ENCODE measurements at regions of chr21 and their contacts with region 1.

Region 1: GRCh38 chr21:35528116-35529042 is 479.3 kb upstream of the RUNX1 start:
- DNase-seq: peak; percentile 79
- ATAC-seq: peak; percentile 88
- H3K4me3 Mint-ChIP-seq: peak overlapping the region; percentile 75
- H3K27ac Mint-ChIP-seq: peak overlapping the region; percentile 93
- H3K4me1 Mint-ChIP-seq: peaks cover 44% of the 10 kb centered on the region
- H3K27me3 Mint-ChIP-seq: no peaks in the 10 kb centered on the region

Region 2: GRCh38 chr21:34807146-34807880 is 721.1 kb before region 1 on chr21:
- CTCF ChIA-PET with region 1: no interaction called
- POLR2A ChIA-PET with region 1: no interaction called
- intact Hi-C with region 1: loop called in 1 of 2 experiments (anchors 1 kb)
- DNase-seq: peak; percentile 83
- ATAC-seq: peak; percentile 92
- H3K4me3 Mint-ChIP-seq: no peak overlapping the region
- H3K27ac Mint-ChIP-seq: peak overlapping the region; percentile 87
- H3K4me1 Mint-ChIP-seq: peaks cover 90% of the 10 kb centered on the region
- H3K27me3 Mint-ChIP-seq: no peaks in the 10 kb centered on the region

Region 3: GRCh38 chr21:35002879-35003722 is 525.3 kb before region 1 on chr21:
- CTCF ChIA-PET with region 1: no interaction called
- POLR2A ChIA-PET with region 1: interaction called, 21 read pairs
- intact Hi-C with region 1: no loop called
- DNase-seq: no peak
- ATAC-seq: peak; percentile 33
- H3K4me3 Mint-ChIP-seq: no peak overlapping the region
- H3K27ac Mint-ChIP-seq: peak overlapping the region; percentile 78
- H3K4me1 Mint-ChIP-seq: peaks cover 94% of the 10 kb centered on the region
- H3K27me3 Mint-ChIP-seq: no peaks in the 10 kb centered on the region

Region 4: DNA sequence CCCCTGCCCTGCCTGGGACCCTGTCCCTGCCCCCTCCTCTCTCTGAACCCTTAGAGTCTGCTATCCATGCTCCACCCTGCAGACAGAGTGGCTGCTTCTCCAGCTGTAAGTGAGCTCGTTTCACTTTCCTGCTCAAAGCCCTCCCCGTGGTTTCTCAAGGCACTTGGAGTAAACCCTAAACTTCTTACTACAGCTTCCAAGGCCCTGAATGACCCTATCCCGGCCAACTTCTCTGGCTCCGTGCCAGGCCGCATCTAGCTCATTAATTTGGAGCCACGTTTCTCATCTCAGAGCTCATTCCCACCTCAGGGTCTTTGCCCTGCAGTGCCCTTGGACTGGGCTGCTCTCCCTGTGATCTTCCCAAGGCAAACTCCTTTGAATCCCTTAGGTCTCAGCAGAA is 244.2 kb before region 1 on chr21:
- CTCF ChIA-PET with region 1: no interaction called
- POLR2A ChIA-PET with region 1: no interaction called
- intact Hi-C with region 1: no loop called
- DNase-seq: no peak
- ATAC-seq: no peak
- H3K4me3 Mint-ChIP-seq: no peak overlapping the region
- H3K27ac Mint-ChIP-seq: no peak overlapping the region
- H3K4me1 Mint-ChIP-seq: peaks cover 4% of the 10 kb centered on the region
- H3K27me3 Mint-ChIP-seq: no peaks in the 10 kb centered on the region

Region 5: DNA sequence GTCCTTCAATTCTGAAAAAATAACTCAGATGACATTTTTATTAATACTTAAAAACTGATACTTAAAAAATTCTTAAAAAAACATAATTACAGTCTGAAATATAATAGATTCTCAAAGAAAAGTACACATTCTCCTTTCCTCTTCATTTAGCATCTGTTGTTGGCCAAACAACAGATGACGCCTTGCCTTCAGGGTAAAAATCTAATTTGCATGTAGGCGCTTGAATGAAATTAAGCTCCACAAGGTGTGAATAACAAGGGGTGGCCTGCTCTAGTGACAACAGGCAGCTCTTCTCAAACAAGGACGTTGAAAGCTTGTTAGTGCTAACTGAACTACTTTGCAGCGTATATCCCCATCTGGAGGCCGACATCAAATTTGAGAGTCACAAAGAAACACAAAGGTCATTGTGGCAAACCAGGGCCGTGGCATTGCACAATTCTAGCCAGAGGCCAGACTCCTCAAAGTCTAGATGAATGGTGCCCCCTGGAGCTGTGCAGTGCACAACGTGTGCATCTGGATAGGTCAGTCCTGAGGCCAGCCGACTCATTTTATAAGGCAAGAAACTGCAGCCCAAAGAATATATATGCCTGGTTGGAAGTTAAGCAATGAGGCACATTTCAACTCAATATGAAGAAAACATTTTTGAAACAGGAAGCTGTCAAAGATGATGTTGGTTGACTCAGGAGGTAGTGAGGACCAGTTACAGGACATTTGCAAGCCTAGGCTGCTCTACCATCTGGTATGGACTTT is 20.1 kb before region 1 on chr21:
- CTCF ChIA-PET with region 1: interaction called, 3 read pairs
- POLR2A ChIA-PET with region 1: no interaction called
- intact Hi-C with region 1: loop called in 1 of 2 experiments (anchors 1 kb)
- DNase-seq: peak; percentile 40
- ATAC-seq: no peak
- H3K4me3 Mint-ChIP-seq: no peak overlapping the region
- H3K27ac Mint-ChIP-seq: no peak overlapping the region
- H3K4me1 Mint-ChIP-seq: peaks cover 53% of the 10 kb centered on the region
- H3K27me3 Mint-ChIP-seq: no peaks in the 10 kb centered on the region

Region 6: GRCh38 chr21:36060159-36060921 is 532.0 kb after region 1 on chr21 and contains the start of gene SETD4:
- CTCF ChIA-PET with region 1: no interaction called
- POLR2A ChIA-PET with region 1: no interaction called
- intact Hi-C with region 1: loop called in 1 of 2 experiments (anchors 2 kb)
- DNase-seq: peak; percentile 95
- ATAC-seq: peak; percentile 92
- H3K4me3 Mint-ChIP-seq: peak within 1 kb of the TSS; percentile 89
- H3K27ac Mint-ChIP-seq: peak within 1 kb of the TSS; percentile 92
- H3K4me1 Mint-ChIP-seq: peaks cover 15% of the 10 kb centered on the region
- H3K27me3 Mint-ChIP-seq: no peaks in the 10 kb centered on the region
- total RNA-seq, gene SETD4: 11.0 to 17.6 TPM